ENCODE measurements at regions of chr15 and their contacts with region 1.

Region 1: GRCh38 chr15:66946578-66947164 is 118.7 kb upstream of the SMAD3 start:
- DNase-seq: peak; percentile 73 to 86 (median 80)
- H3K4me3 ChIP-seq: no peak overlapping the region
- H3K27ac ChIP-seq: no peak overlapping the region
- H3K4me1 ChIP-seq: peaks cover 0 to 4% (median 0%) of the 10 kb centered on the region in 4 experiments
- H3K27me3 ChIP-seq: no peaks in the 10 kb centered on the region

Region 2: DNA sequence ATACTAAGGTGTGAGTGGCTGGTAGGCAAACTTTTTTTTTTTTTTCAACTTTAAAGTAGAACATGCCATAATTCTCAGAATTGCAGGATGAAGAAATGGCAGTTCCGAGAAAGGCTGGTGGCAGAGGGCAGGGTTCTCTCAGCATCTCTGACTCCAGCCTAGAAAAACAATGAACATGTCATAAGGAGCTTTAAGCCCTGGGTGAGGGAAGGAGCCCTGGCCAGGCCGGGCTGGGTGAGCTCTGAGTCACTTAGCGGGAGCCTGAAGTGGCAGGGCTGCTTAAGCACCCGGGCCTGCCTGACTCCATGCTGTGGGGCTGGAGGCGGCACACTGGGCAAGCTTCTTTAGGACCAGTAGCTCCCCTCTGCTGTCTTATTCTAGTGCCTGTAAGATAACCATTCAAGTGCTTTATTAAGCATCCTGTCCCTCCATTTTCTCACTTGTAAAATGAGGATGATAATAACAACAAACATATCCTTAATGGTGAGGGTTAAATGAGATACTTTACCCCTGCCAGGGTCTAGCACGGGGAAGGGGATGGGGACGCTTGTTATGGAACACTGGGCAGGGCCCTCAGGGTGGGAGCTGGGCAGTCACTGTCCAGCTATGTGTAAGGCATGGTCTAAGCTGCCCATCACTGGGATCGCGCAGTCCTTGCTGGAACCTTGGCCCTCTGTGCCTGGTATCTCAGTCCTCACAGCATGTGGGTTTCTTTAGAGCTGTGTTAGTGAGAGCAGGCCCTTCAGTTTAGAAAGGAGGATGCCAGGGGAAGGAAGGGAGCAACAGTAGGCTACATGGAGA is 226.3 kb before region 1 on chr15:
- CTCF ChIA-PET with region 1: no interaction called
- POLR2A ChIA-PET with region 1: no interaction called
- DNase-seq: peak in 2 of 3 donors; percentile 43 to 56
- H3K4me3 ChIP-seq: no peak overlapping the region
- H3K27ac ChIP-seq: no peak overlapping the region
- H3K4me1 ChIP-seq: peaks cover 0 to 27% (median 7%) of the 10 kb centered on the region in 4 experiments
- H3K27me3 ChIP-seq: no peaks in the 10 kb centered on the region

Region 3: DNA sequence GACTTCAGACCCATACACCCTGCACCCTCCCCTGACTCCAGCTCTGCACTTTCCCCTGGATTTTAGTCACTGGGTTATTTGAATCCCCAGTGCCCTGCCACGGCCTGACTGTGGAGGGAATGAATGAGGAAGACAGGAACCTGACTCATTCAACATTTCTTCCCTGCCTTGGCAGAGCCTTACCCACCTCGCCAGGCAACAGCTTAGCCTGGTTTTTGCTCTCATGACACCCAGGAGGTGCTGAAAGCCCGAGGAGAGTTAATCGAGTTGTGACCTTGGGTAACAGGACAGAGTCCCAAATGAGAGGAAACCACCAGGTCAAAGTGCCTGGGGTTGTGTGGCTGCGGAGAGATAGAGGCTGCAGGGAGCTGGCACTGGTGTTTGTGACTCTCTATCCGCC is 116.3 kb before region 1 on chr15:
- CTCF ChIA-PET with region 1: no interaction called
- POLR2A ChIA-PET with region 1: no interaction called
- DNase-seq: no peak
- H3K4me3 ChIP-seq: no peak overlapping the region
- H3K27ac ChIP-seq: no peak overlapping the region
- H3K4me1 ChIP-seq: no peaks in the 10 kb centered on the region
- H3K27me3 ChIP-seq: no peaks in the 10 kb centered on the region

Region 4: DNA sequence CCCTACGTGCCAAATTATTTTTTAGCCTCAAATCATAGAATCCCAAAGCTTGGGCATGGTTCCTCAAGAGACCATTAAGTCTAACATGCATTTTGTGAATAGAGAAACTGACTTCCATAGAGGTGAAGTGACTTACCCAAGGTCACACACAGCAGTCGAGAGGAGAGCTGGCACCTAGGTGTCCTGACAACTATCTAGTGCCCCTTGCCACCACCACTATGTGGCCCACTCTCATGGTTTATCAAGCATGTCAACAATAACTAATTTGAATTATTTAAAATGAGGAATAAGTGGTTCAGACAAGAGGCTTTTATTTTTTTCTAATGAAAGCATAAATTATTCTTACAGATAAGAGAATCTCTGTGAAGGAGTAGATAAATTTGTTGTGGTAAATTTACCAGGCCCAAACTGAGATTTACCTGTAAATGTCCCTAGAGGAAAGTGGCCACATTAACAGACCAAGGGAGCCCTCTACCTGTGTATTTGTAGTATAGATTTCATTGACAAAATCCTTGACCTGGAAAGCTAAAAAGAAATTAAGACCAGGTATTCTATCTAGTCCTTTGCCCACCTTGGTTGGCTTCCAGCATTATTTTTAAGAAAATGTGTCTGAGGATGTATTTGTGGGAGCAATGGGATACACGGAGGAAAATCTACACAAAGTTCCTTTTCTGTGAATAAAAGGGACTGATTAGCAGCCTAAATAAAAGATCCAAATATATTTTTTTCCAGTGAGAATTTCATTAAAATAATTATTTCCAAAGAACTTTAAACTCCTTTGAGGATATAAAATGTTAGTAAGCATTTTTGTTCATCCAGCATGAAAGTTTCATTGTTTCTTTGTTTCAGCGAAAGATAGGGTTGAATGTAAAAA is 357.1 kb after region 1 on chr15:
- CTCF ChIA-PET with region 1: interaction called, 39 read pairs
- POLR2A ChIA-PET with region 1: interaction called, 3 read pairs
- DNase-seq: peak; percentile 46 to 70 (median 59)
- H3K4me3 ChIP-seq: no peak overlapping the region
- H3K27ac ChIP-seq: no peak overlapping the region
- H3K4me1 ChIP-seq: peaks cover 0 to 3% (median 0%) of the 10 kb centered on the region in 4 experiments
- H3K27me3 ChIP-seq: no peaks in the 10 kb centered on the region

Region 5: GRCh38 chr15:67433495-67434099 is 486.9 kb after region 1 on chr15:
- CTCF ChIA-PET with region 1: interaction called, 13 read pairs
- POLR2A ChIA-PET with region 1: no interaction called
- DNase-seq: peak; percentile 23 to 45 (median 33)
- H3K4me3 ChIP-seq: no peak overlapping the region
- H3K27ac ChIP-seq: no peak overlapping the region
- H3K4me1 ChIP-seq: peaks cover 0 to 2% (median 0%) of the 10 kb centered on the region in 4 experiments
- H3K27me3 ChIP-seq: no peaks in the 10 kb centered on the region

Measured in common myeloid progenitor, CD34-positive (primary cell).